ENCODE measurements at regions of chr10 and their contacts with region 1.

Region 1: GRCh38 chr10:61943674-61944410 is 42.3 kb downstream of the ARID5B start:
- DNase-seq: no peak
- H3K4me3 Mint-ChIP-seq: peak overlapping the region; percentile 47
- H3K27ac Mint-ChIP-seq: peak overlapping the region; percentile 93
- H3K4me1 Mint-ChIP-seq: peaks cover 47% of the 10 kb centered on the region
- H3K27me3 Mint-ChIP-seq: no peaks in the 10 kb centered on the region

Region 2: DNA sequence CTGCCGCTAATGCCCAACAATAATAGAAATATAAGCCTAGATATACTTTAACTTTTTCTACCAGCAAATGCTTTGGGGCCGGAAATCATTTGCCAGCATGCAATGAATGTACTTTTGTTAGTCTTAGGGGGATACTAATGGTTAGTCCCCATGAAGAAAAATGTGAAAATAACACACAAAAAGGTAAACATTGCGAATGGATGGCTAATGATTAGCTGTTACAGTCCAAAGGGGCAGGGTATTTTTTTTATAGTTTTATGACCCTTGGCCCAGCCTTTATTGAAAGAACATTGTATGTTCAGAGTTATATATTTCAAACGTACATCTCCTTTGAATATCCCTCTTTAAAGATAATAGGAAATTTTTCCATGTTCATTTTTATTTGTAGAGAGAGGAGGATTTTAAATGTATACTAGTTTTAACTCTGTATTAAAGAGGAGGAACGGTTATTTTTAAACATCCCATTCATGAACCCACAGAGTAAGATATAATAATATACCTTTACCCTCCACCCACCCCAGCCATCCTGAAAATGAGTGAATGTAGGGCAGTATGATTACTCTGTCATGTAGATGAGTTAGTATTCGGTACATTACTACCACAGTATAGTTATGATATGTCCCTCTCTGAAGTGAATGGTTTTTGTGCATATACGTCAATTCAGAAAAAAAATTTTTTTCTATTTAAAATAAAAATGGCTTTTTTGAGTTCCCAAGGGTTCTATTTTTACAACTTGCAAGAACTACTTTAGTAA is 21.3 kb after region 1 on chr10:
- intact Hi-C with region 1: loop called (anchors 1 kb)
- DNase-seq: no peak
- H3K4me3 Mint-ChIP-seq: no peak overlapping the region
- H3K27ac Mint-ChIP-seq: peak overlapping the region; percentile 76
- H3K4me1 Mint-ChIP-seq: peaks cover 76% of the 10 kb centered on the region
- H3K27me3 Mint-ChIP-seq: no peaks in the 10 kb centered on the region

Region 3: DNA sequence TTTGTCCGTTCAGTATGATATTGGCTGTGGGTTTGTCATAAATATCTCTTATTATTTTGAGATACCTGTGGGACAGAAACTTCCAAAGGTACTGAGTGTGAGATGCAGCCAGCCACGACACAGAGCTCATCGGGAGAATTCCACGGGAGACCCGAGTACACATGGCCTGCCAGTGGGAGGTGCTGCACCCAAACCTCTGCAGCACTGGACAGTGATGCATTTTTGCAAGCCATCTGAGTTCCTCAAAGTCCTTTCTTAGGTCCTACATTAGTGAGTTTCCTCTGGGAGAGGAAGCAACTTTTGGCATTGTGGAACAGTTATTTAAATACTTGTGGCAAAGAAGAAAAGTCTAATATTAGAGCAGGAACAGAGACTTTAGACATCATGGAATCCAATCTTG is 35.1 kb after region 1 on chr10:
- intact Hi-C with region 1: no loop called
- DNase-seq: no peak
- H3K4me3 Mint-ChIP-seq: no peak overlapping the region
- H3K27ac Mint-ChIP-seq: no peak overlapping the region
- H3K4me1 Mint-ChIP-seq: peaks cover 14% of the 10 kb centered on the region
- H3K27me3 Mint-ChIP-seq: no peaks in the 10 kb centered on the region

Region 4: GRCh38 chr10:61992671-61993668 is 49.1 kb after region 1 on chr10:
- intact Hi-C with region 1: loop called (anchors 1 kb)
- DNase-seq: peak; percentile 49
- H3K4me3 Mint-ChIP-seq: peak overlapping the region; percentile 73
- H3K27ac Mint-ChIP-seq: peak overlapping the region; percentile 88
- H3K4me1 Mint-ChIP-seq: peaks cover 68% of the 10 kb centered on the region
- H3K27me3 Mint-ChIP-seq: no peaks in the 10 kb centered on the region

Region 5: GRCh38 chr10:62063795-62064472 is 120.1 kb after region 1 on chr10:
- intact Hi-C with region 1: loop called (anchors 1 kb)
- DNase-seq: no peak
- H3K4me3 Mint-ChIP-seq: peak overlapping the region; percentile 39
- H3K27ac Mint-ChIP-seq: peak overlapping the region; percentile 87
- H3K4me1 Mint-ChIP-seq: peaks cover 72% of the 10 kb centered on the region
- H3K27me3 Mint-ChIP-seq: no peaks in the 10 kb centered on the region

Region 6: DNA sequence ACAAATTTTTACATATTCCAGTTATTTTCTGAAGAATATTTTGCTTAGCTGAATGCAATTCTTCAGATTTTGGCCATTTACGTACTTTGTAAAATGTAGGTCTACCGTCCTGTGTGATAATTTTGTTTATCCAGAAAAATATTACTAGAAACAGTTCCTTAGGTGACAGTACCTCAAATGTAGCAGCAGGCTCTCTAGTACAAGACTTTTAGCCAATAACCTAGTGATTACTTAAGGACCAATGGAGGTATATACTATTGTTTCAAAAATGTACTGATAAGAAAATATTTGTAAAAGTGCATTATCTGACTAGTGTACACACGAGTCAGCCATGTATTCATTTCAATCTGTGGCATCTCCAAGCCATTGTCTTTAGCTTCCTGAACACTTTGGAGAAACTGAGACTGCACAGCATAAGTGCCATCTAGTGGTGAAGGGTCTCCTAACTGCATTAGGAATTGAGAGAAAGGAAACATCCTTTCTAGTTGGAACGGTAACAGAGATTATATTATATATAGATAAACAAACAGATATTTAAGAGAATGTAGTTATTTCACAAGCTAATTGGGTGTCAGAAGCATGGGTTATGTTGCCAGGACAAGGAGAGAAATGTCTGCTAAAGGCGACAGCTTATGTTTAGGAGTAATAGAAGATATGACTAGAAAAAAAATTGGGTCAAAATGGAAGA is 301.1 kb after region 1 on chr10:
- intact Hi-C with region 1: loop called (anchors 1 kb)
- DNase-seq: peak; percentile 39
- H3K4me3 Mint-ChIP-seq: no peak overlapping the region
- H3K27ac Mint-ChIP-seq: peak overlapping the region; percentile 63
- H3K4me1 Mint-ChIP-seq: peaks cover 32% of the 10 kb centered on the region
- H3K27me3 Mint-ChIP-seq: no peaks in the 10 kb centered on the region

Region 7: DNA sequence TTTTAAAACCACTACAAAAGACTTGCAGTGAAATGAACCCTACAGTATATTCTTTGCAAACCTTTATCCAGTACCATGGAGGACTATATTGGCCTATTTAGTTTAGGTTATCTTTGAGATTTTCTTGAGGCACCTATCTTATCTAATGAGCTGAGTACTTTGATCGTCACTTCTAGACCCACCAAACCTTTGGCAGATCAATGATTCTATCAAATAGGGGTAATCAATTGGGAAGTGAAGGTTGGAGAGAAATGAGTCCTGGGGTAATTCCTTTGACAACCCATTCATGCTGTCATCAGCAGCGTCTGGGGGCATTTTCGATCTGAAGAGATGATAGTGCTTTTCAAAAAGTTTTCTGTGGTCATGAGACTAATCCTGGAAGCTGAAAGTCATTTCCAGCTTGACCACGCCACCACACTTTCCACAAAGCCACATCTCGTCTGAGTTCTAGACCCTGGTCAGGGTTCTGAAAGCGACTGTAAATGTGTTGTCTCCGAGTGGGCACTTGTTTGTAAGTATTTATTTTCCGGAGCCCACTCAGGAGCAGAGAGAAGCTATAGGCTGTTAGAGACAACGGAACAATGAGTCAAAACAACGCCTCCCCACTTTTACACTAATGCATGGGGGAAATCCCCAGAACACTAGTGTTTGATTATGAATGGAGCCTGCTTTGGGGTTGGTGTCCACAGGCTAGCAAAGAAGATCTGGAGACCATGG is 867.5 kb after region 1 on chr10:
- intact Hi-C with region 1: loop called (anchors 5 kb)
- DNase-seq: peak; percentile 58
- H3K4me3 Mint-ChIP-seq: peak overlapping the region; percentile 97
- H3K27ac Mint-ChIP-seq: peak overlapping the region; percentile 83
- H3K4me1 Mint-ChIP-seq: peaks cover 67% of the 10 kb centered on the region
- H3K27me3 Mint-ChIP-seq: peaks cover 2% of the 10 kb centered on the region

Measured in activated T-helper 2 cell treated with anti-CD3 and anti-CD28 coated beads, Interferon-gamma antibody, Interleukin-2, Interleukin-4, amounts not matched to agents 10 μg/mL and 5 μg/mL and 100 μg/mL, durations not matched to agents 14 hours and 24 hours and 36 hours (primary cell).